Adrenal gland (tissue), 19 donors: ENCODE measurements at regions of chr12 and their contacts with region 1.

Region 1: GRCh38 chr12:6778574-6779550 is 6.5 kb downstream of the LAG3 start:
- DNase-seq: peak; percentile 95 to 98 (median 97)
- H3K4me3 ChIP-seq: peak overlapping the region in 2 of 4 donors; percentile 4 to 44
- H3K27ac ChIP-seq: peak overlapping the region in 4 of 5 donors; percentile 3 to 84 (median 48)
- H3K4me1 ChIP-seq: peaks cover 7 to 13% of the 10 kb centered on the region in 2 donors
- H3K27me3 ChIP-seq: no peaks in the 10 kb centered on the region
- CTCF ChIP-seq: peak; percentile 88 to 99 (median 98)
- POLR2A ChIP-seq: peak in 1 of 2 donors; percentile 59

Region 2: GRCh38 chr12:6735448-6736191 is 43.2 kb before region 1 on chr12:
- intact Hi-C with region 1: loop called in 1 of 2 experiments (anchors 5 kb)
- DNase-seq: peak; percentile 66 to 89 (median 79)
- H3K4me3 ChIP-seq: no peak overlapping the region
- H3K27ac ChIP-seq: peak overlapping the region in 1 of 5 donors; percentile 54
- H3K4me1 ChIP-seq: peaks cover 14 to 17% of the 10 kb centered on the region in 2 donors
- H3K27me3 ChIP-seq: no peaks in the 10 kb centered on the region
- CTCF ChIP-seq: peak; percentile 51 to 77 (median 74)
- POLR2A ChIP-seq: no peak

Region 3: GRCh38 chr12:6745741-6746525 is 32.9 kb before region 1 on chr12:
- intact Hi-C with region 1: loop called in 1 of 2 experiments (anchors 5 kb)
- DNase-seq: no peak
- H3K4me3 ChIP-seq: no peak overlapping the region
- H3K27ac ChIP-seq: peak overlapping the region in 2 of 5 donors; percentile 5 to 81
- H3K4me1 ChIP-seq: peaks cover 0 to 2% of the 10 kb centered on the region in 2 donors
- H3K27me3 ChIP-seq: no peaks in the 10 kb centered on the region
- CTCF ChIP-seq: no peak
- POLR2A ChIP-seq: no peak

Region 4: GRCh38 chr12:6752921-6753771 is 25.7 kb before region 1 on chr12 and contains the start of gene MLF2:
- intact Hi-C with region 1: loop called (anchors 2 to 5 kb)
- DNase-seq: peak; percentile 98 to 99 (median 99)
- H3K4me3 ChIP-seq: peak within 1 kb of the TSS; percentile 12 to 95 (median 62)
- H3K27ac ChIP-seq: peak within 1 kb of the TSS; percentile 77 to 97 (median 95)
- H3K4me1 ChIP-seq: peaks cover 8 to 22% of the 10 kb centered on the region in 2 donors
- H3K27me3 ChIP-seq: no peaks in the 10 kb centered on the region
- CTCF ChIP-seq: peak in 3 of 6 experiments; percentile 97 to 98 (median 97)
- POLR2A ChIP-seq: peak; percentile 54 to 85
- total RNA-seq, gene MLF2: 135 to 334 (median 225) TPM